ENCODE measurements at regions of chr12 and their contacts with region 1.

Region 1: GRCh38 chr12:102061560-102062418 is at the start of gene WASHC3:
- DNase-seq: peak; percentile 74
- ATAC-seq: peak; percentile 95
- H3K4me3 ChIP-seq: peak within 1 kb of the TSS; percentile 73
- H3K27ac ChIP-seq: peak within 1 kb of the TSS; percentile 96
- H3K4me1 ChIP-seq: peaks cover 10% of the 10 kb centered on the region; the same call in 1 of the 2 replicates
- H3K27me3 ChIP-seq: no peaks in the 10 kb centered on the region
- CTCF ChIP-seq: no peak
- EP300 ChIP-seq: no peak
- POLR2A ChIP-seq: peak; percentile 76
- RAD21 ChIP-seq: no peak
- polyA plus RNA-seq, gene WASHC3: 87.0 to 106 TPM

Region 2: GRCh38 chr12:101582937-101583336 is 478.9 kb before region 1 on chr12:
- CTCF ChIA-PET with region 1: no interaction called
- POLR2A ChIA-PET with region 1: no interaction called
- RAD21 ChIA-PET with region 1: no interaction called
- SMC1A ChIA-PET with region 1: no interaction called
- in situ Hi-C with region 1: no loop called
- intact Hi-C with region 1: no loop called
- DNase-seq: no peak
- ATAC-seq: no peak
- H3K4me3 ChIP-seq: no peak overlapping the region
- H3K27ac ChIP-seq: no peak overlapping the region
- H3K4me1 ChIP-seq: no peaks in the 10 kb centered on the region
- H3K27me3 ChIP-seq: peaks cover 0 to 2% of the 10 kb centered on the region in 2 experiments; a peak in 1 of 4 replicates
- CTCF ChIP-seq: no peak
- EP300 ChIP-seq: no peak
- POLR2A ChIP-seq: no peak
- RAD21 ChIP-seq: no peak

Region 3: GRCh38 chr12:102010265-102010994 is 51.4 kb before region 1 on chr12:
- CTCF ChIA-PET with region 1: no interaction called
- POLR2A ChIA-PET with region 1: interaction called, 4 read pairs
- RAD21 ChIA-PET with region 1: interaction called, 3 read pairs
- SMC1A ChIA-PET with region 1: interaction called, 6 read pairs
- in situ Hi-C with region 1: no loop called
- intact Hi-C with region 1: loop called (anchors 1 kb)
- DNase-seq: peak; percentile 84
- ATAC-seq: peak; percentile 98
- H3K4me3 ChIP-seq: peak overlapping the region; percentile 42; the same call in 1 of the 2 replicates
- H3K27ac ChIP-seq: peak overlapping the region; percentile 93
- H3K4me1 ChIP-seq: peaks cover 21% of the 10 kb centered on the region
- H3K27me3 ChIP-seq: no peaks in the 10 kb centered on the region
- CTCF ChIP-seq: no peak
- EP300 ChIP-seq: no peak
- POLR2A ChIP-seq: peak; percentile 63
- RAD21 ChIP-seq: no peak

Region 4: GRCh38 chr12:102119674-102120563 is 58.1 kb after region 1 on chr12 and contains the starts of genes NUP37 and PARPBP:
- CTCF ChIA-PET with region 1: no interaction called
- POLR2A ChIA-PET with region 1: interaction called, 5 read pairs
- RAD21 ChIA-PET with region 1: interaction called, 4 read pairs
- SMC1A ChIA-PET with region 1: interaction called, 8 read pairs
- in situ Hi-C with region 1: no loop called
- intact Hi-C with region 1: loop called (anchors 5 kb)
- DNase-seq: peak; percentile 68
- ATAC-seq: peak; percentile 95
- H3K4me3 ChIP-seq: peak within 1 kb of the TSS; percentile 88
- H3K27ac ChIP-seq: peak within 1 kb of the TSS; percentile 86
- H3K4me1 ChIP-seq: no peaks in the 10 kb centered on the region
- H3K27me3 ChIP-seq: no peaks in the 10 kb centered on the region
- CTCF ChIP-seq: peak in 1 of 3 experiments; percentile 8; a peak in 1 of 6 replicates
- EP300 ChIP-seq: 0 out of 4 replicates have a peak, but pooled peaks of 1 of the 2 experiments have one; percentile 6
- POLR2A ChIP-seq: peak; percentile 95
- RAD21 ChIP-seq: no peak
- polyA plus RNA-seq, gene NUP37: 191 to 250 TPM
- polyA plus RNA-seq, gene PARPBP: 29.2 to 40.3 TPM